ENCODE measurements at regions of chrX and their contacts with region 1.

Region 1: DNA sequence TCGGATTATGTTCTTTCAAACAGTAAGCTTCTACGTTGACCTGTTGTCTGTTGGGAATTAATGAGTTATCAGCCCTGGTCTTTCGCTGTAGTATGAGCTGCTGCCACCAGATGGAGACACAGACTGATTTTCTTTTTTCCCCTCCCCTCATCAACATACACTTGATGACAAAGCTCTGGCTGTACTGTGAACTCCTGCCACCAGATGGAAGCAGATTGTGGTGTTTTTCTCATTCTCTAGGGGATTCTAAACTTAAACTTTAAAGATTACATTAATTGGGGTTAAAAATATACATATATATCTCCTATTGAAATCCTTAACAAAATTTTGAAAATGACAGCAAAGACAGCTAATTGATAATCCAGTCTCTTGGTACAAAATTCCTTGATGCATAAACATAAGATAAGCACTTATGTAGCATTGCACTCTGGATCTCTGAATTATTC is 44.8 kb downstream of the SMS start:
- DNase-seq: peak; percentile 66
- H3K4me3 Mint-ChIP-seq: no peak overlapping the region
- H3K27ac Mint-ChIP-seq: no peak overlapping the region
- H3K4me1 Mint-ChIP-seq: peaks cover 2% of the 10 kb centered on the region
- H3K27me3 Mint-ChIP-seq: no peaks in the 10 kb centered on the region

Region 2: DNA sequence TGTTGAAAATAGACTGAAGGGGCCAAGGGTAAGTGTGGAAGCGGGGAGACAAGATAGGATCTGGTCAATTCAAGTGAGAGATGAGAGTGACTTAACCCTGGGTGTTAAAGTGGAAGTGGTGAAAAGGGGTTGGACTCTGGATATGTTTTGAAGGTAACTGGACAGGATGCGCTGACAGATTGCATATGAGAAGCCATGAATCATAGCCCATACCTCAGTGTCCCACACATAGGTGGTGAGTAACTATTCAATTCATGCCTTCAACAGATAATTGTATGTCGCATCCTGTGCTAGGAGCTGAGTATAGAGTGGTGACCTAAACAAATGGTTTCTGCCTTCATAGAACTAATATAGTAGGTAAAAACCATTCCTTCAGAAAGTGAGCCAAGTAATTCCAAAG is 403.9 kb before region 1 on chrX:
- CTCF ChIA-PET with region 1: no interaction called
- POLR2A ChIA-PET with region 1: no interaction called
- DNase-seq: no peak
- H3K4me3 Mint-ChIP-seq: no peak overlapping the region
- H3K27ac Mint-ChIP-seq: no peak overlapping the region
- H3K4me1 Mint-ChIP-seq: no peaks in the 10 kb centered on the region
- H3K27me3 Mint-ChIP-seq: no peaks in the 10 kb centered on the region

Region 3: DNA sequence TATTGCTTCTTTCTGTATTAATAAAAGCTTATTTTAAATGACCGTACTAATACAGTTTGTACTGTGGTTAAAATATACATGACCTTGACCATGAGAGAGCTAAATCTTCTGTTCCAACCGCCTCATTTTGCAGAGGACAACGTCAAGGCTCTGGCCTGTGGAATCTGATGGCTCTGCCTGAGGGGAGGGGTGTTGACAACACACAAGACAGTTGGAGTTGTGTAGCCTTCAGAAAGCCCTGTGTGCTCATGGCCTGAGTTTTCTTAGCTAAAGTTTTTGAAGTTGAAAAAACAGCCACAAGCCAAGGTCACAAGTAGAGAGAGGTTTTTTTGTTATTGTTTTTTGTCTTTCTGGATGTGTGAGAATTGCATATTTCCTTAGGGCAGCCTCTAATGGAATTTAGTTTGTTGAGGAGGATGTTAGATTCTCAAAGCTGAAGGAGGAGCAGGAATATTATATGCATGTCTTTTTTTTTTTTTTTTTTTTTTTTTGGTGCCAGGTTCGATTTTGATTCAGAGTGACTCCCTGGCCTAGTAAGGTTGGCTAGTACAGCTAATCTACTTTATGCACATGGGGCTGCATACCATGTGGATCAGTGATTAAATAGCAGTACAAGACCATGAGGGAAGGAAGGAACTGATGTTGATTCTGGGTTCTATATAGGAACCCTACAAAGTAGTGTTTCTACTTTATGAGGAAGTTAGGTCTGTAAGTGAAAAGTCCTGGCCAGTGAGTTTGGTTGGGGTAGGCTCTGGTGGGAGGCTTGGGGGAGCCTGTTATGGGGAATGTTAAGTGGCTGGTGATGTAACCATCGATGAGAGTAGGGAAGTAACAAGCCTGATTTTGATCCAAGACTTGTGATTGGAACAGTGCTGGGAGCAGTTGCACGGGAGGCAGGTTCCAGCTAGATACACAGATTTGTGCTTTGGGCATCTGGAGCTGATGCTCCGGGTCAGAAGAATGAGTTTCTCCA is 24.5 kb before region 1 on chrX:
- CTCF ChIA-PET with region 1: no interaction called
- POLR2A ChIA-PET with region 1: no interaction called
- DNase-seq: no peak
- H3K4me3 Mint-ChIP-seq: no peak overlapping the region
- H3K27ac Mint-ChIP-seq: peak overlapping the region; percentile 21
- H3K4me1 Mint-ChIP-seq: peaks cover 44% of the 10 kb centered on the region
- H3K27me3 Mint-ChIP-seq: no peaks in the 10 kb centered on the region

Region 4: GRCh38 chrX:21972721-21973120 is 12.6 kb before region 1 on chrX:
- CTCF ChIA-PET with region 1: interaction called, 39 read pairs
- POLR2A ChIA-PET with region 1: no interaction called
- DNase-seq: peak; percentile 51
- H3K4me3 Mint-ChIP-seq: peak overlapping the region; percentile 34
- H3K27ac Mint-ChIP-seq: peak overlapping the region; percentile 94
- H3K4me1 Mint-ChIP-seq: peaks cover 41% of the 10 kb centered on the region
- H3K27me3 Mint-ChIP-seq: no peaks in the 10 kb centered on the region

Region 5: DNA sequence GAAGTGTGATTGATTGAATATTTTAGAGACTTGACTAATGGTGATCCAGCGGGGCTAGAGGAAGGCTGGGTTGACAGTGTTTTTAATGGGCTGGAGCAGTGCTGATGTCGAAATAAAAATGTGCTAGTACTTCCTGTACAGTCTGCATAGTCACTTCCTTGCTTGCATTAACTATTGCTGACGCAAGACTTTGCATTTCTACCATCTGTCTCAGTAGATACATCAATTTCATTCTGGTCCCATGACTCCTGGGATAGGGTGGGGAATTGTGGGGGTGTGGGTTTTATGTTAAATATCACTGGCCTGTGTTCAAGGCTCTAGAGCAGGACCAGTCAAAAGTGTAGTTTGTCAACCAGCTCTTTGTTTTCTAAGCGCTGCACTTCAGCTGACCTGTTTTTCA is 11.5 kb after region 1 on chrX:
- CTCF ChIA-PET with region 1: interaction called, 15 read pairs
- POLR2A ChIA-PET with region 1: no interaction called
- DNase-seq: no peak
- H3K4me3 Mint-ChIP-seq: no peak overlapping the region
- H3K27ac Mint-ChIP-seq: peak overlapping the region; percentile 38
- H3K4me1 Mint-ChIP-seq: peaks cover 14% of the 10 kb centered on the region
- H3K27me3 Mint-ChIP-seq: no peaks in the 10 kb centered on the region

Measured in activated CD4-positive, alpha-beta T cell treated with anti-CD3 and anti-CD28 coated beads, Interleukin-2, amount 10 ng/mL, durations not matched to agents 7 days and 5 days (primary cell).